Left ventricle myocardium inferior (tissue), 1 donor: ENCODE measurements at regions of chr1 and their contacts with region 1.

Region 1: GRCh38 chr1:109910123-109910962 is at the start of gene CSF1:
- DNase-seq: peak; percentile 83
- H3K4me3 ChIP-seq: peak within 1 kb of the TSS; percentile 96
- H3K27ac ChIP-seq: peak within 1 kb of the TSS; percentile 93
- H3K4me1 ChIP-seq: peaks cover 81% of the 10 kb centered on the region
- H3K27me3 ChIP-seq: no peaks in the 10 kb centered on the region
- CTCF ChIP-seq: no peak
- total RNA-seq, gene CSF1: 13.9 TPM

Region 2: GRCh38 chr1:109816175-109816811 is 94.0 kb before region 1 on chr1:
- intact Hi-C with region 1: loop called (anchors 10 kb)
- DNase-seq: no peak
- H3K4me3 ChIP-seq: no peak overlapping the region
- H3K27ac ChIP-seq: no peak overlapping the region
- H3K4me1 ChIP-seq: peaks cover 25% of the 10 kb centered on the region
- H3K27me3 ChIP-seq: no peaks in the 10 kb centered on the region
- CTCF ChIP-seq: no peak

Region 3: DNA sequence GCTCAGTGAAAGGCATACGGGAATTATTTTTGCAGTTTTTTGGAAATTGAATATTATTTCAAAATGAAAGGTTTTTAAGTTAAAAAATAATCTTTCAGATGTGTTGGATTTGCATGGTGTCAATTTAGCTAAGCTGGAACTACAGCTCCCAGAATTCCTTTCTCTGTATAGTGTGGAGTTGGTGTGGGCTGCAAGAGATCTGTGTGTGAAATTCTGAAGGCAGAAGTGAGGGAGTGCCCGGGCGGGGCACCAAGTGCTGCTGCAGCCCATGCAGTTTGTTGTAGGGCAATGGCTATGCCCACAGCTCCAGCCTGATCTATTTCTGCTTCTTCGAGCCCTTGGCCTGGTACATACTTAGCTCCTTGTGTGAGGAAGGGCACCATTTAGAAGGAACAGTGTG is 60.1 kb before region 1 on chr1:
- intact Hi-C with region 1: no loop called
- DNase-seq: no peak
- H3K4me3 ChIP-seq: no peak overlapping the region
- H3K27ac ChIP-seq: no peak overlapping the region
- H3K4me1 ChIP-seq: peaks cover 23% of the 10 kb centered on the region
- H3K27me3 ChIP-seq: no peaks in the 10 kb centered on the region
- CTCF ChIP-seq: no peak

Region 4: GRCh38 chr1:109979489-109980091 is 69.2 kb after region 1 on chr1:
- intact Hi-C with region 1: loop called (anchors 10 kb)
- DNase-seq: no peak
- H3K4me3 ChIP-seq: no peak overlapping the region
- H3K27ac ChIP-seq: peak overlapping the region; percentile 74
- H3K4me1 ChIP-seq: peaks cover 59% of the 10 kb centered on the region
- H3K27me3 ChIP-seq: no peaks in the 10 kb centered on the region
- CTCF ChIP-seq: no peak